ENCODE measurements at regions of chr4 and their contacts with region 1.

Region 1: GRCh38 chr4:128338634-128339355 is 51.2 kb upstream of the PGRMC2 start:
- DNase-seq: peak; percentile 76
- ATAC-seq: peak; percentile 95
- H3K4me3 ChIP-seq: no peak overlapping the region
- H3K27ac ChIP-seq: no peak overlapping the region
- H3K4me1 ChIP-seq: peaks cover 19% of the 10 kb centered on the region
- H3K27me3 ChIP-seq: no peaks in the 10 kb centered on the region
- CTCF ChIP-seq: no peak

Region 2: GRCh38 chr4:128322995-128323394 is 15.8 kb before region 1 on chr4:
- CTCF ChIA-PET with region 1: no interaction called
- POLR2A ChIA-PET with region 1: no interaction called
- intact Hi-C with region 1: loop called (anchors 2 kb)
- DNase-seq: peak; percentile 86
- ATAC-seq: peak; percentile 87
- H3K4me3 ChIP-seq: peak overlapping the region; percentile 45; the same call in 1 of the 2 replicates
- H3K27ac ChIP-seq: peak overlapping the region; percentile 82
- H3K4me1 ChIP-seq: peaks cover 35% of the 10 kb centered on the region
- H3K27me3 ChIP-seq: no peaks in the 10 kb centered on the region
- CTCF ChIP-seq: no peak